ENCODE measurements at regions of chr5 and their contacts with region 1.

Region 1: DNA sequence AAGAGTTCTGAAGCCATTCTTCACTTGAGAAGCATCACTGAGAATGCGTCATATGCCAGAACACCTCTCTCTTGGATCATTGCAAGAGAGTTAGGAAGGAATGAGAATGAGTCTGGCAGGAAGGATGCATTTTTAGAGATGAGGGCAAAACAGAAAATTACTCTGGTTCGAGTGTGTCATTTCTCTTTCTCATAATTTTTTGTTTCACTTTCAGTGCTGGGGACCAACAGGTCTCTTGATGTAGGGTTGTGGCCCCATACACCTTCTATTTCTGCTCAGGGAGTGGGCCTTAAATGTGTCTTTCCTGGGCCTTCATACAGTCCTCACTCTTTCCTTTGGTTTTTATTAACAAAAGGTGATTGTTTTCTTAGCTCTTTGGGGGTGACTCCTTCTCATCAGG is 302.4 kb downstream of the NR3C1 start:
- DNase-seq: no peak
- ATAC-seq: peak; percentile 81
- H3K4me3 Mint-ChIP-seq: peak overlapping the region; percentile 7
- H3K27ac Mint-ChIP-seq: peak overlapping the region; percentile 68
- H3K4me1 Mint-ChIP-seq: peaks cover 31% of the 10 kb centered on the region
- H3K27me3 Mint-ChIP-seq: no peaks in the 10 kb centered on the region

Region 2: GRCh38 chr5:143023411-143024096 is 77.6 kb before region 1 on chr5:
- CTCF ChIA-PET with region 1: no interaction called
- POLR2A ChIA-PET with region 1: no interaction called
- intact Hi-C with region 1: loop called (anchors 5 kb)
- DNase-seq: peak; percentile 77
- ATAC-seq: peak; percentile 88
- H3K4me3 Mint-ChIP-seq: no peak overlapping the region
- H3K27ac Mint-ChIP-seq: peak overlapping the region; percentile 1
- H3K4me1 Mint-ChIP-seq: peaks cover 48% of the 10 kb centered on the region
- H3K27me3 Mint-ChIP-seq: no peaks in the 10 kb centered on the region

Region 3: GRCh38 chr5:143066556-143067281 is 34.4 kb before region 1 on chr5:
- CTCF ChIA-PET with region 1: no interaction called
- POLR2A ChIA-PET with region 1: no interaction called
- intact Hi-C with region 1: loop called (anchors 2 to 5 kb)
- DNase-seq: peak; percentile 63
- ATAC-seq: peak; percentile 69
- H3K4me3 Mint-ChIP-seq: no peak overlapping the region
- H3K27ac Mint-ChIP-seq: peak overlapping the region; percentile 75
- H3K4me1 Mint-ChIP-seq: peaks cover 25% of the 10 kb centered on the region
- H3K27me3 Mint-ChIP-seq: no peaks in the 10 kb centered on the region

Region 4: GRCh38 chr5:143174714-143175398 is 73.7 kb after region 1 on chr5:
- CTCF ChIA-PET with region 1: no interaction called
- POLR2A ChIA-PET with region 1: no interaction called
- intact Hi-C with region 1: no loop called
- DNase-seq: no peak
- ATAC-seq: no peak
- H3K4me3 Mint-ChIP-seq: no peak overlapping the region
- H3K27ac Mint-ChIP-seq: no peak overlapping the region
- H3K4me1 Mint-ChIP-seq: peaks cover 3% of the 10 kb centered on the region
- H3K27me3 Mint-ChIP-seq: no peaks in the 10 kb centered on the region

Measured in activated CD4-positive, alpha-beta T cell treated with anti-CD3 and anti-CD28 coated beads for 36 hours (primary cell).